ENCODE measurements at regions of chr22 and their contacts with region 1.

Region 1: GRCh38 chr22:31943976-31944699 is at the start of gene YWHAH:
- DNase-seq: peak; percentile 98
- total RNA-seq, gene YWHAH: 116 TPM

Region 2: GRCh38 chr22:31661851-31662656 is 282.1 kb before region 1 on chr22 and contains the start of gene PISD:
- intact Hi-C with region 1: loop called (anchors 10 kb)
- DNase-seq: peak; percentile 98
- total RNA-seq, gene PISD: 20.2 TPM

Region 3: DNA sequence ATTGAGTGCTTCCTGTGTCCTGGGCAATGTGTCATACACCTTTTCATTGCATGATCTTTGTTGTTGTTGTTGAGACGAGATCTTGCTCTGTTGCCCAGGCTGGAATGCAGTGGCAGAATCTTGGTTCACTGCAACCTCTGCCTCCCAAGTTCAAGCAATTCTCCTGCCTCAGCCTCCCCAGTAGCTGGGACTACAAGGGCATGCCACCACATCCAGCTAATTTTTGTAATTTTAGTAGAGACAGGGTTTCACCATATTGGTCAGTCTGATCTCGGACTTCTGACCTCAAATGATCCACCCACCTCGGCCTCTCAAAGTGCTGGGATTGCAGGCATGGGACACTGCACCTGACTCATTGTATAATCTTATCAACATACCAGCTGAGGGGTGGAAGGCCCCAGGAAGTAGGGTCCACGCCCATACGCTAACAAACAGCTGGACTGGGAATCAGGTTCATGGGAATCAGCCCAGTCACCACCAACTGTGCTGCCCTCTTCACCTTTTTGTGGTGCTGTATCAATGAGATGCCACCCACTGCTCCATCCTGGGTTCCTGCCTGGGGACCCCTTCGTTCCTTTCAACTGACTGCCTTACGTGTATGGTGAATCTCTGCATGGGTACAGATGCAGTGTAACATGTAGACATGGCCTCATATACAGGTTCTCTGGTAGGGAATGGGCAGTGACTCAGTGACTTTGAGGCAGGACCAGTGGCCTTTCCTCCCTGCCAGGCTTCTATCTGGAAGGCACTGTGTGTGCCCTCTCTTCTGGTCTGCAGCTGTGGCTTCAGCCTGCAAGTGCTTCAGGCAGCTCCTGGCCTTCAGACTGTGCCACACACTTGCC is 32.4 kb before region 1 on chr22:
- intact Hi-C with region 1: no loop called
- DNase-seq: no peak

Region 4: DNA sequence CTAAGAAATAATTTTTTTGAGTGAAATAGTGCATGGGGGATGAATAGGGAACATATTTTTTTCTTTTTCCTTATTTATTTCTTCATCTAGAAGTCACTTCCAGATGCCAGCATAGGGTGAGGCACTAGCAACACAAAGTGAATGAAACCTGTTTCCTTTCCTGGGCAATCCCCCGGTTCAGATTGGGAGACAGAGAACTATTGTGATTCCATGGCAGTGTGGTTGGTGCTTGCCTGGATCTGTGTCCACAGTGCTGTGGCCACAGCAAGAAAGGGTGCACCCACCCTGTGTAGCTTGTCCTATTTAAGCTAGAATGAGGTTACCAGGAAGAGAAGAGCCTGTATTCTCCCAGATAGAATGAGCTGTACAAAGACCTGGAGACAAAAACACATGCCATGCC is 156.6 kb after region 1 on chr22:
- intact Hi-C with region 1: no loop called
- DNase-seq: no peak